CD4-positive, alpha-beta T cell (primary cell): ENCODE measurements at regions of chr6 and their contacts with region 1.

Region 1: DNA sequence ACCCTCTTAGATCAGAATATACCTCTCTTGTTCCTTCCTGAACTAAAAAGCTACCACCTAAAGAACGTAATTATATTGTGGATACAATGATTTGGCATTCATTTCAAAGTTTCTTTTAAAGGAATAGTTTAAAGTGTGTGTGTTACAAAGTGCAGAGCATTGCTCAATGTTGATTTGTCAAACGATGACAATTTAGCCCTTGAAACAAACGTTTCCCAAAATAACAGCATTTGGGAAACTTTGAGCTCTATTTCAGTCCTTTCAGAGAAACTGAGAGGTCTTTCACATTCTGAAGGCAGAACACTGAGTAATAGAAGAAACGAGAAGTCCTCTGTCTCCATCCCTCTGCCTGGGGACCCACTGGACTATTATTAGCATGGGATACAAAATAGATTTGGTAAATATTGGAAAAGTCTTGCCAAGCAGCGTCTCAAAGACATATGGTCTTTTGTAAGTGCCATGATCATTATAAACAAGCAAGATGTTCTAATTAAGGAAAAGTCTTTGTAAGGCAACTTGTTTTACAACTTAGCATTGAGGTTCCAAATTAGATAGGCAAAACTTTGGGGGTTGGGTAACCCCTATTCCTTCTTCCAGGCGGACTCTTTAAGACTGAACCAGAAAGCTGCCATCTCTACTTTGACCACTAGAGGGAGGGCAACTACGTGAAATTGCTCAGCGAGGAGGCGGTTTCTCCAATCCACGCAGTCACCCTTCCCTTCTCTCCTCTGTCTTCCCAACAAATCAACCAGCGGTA is 208.8 kb downstream of the RNF144B start:
- DNase-seq: peak in 9 of 14 experiments; percentile 4 to 57 (median 22)
- ATAC-seq: no peak
- H3K4me3 ChIP-seq: no peak overlapping the region
- H3K4me3 Mint-ChIP-seq: no peak overlapping the region
- H3K27ac ChIP-seq: no peak overlapping the region
- H3K27ac Mint-ChIP-seq: no peak overlapping the region
- H3K4me1 ChIP-seq: no peaks in the 10 kb centered on the region
- H3K4me1 Mint-ChIP-seq: no peaks in the 10 kb centered on the region
- H3K27me3 ChIP-seq: no peaks in the 10 kb centered on the region
- H3K27me3 Mint-ChIP-seq: peaks cover 42% of the 10 kb centered on the region
- CTCF ChIP-seq: peak; percentile 95

Region 2: GRCh38 chr6:20056350-20056992 is 1460.5 kb after region 1 on chr6:
- CTCF ChIA-PET with region 1: no interaction called
- POLR2A ChIA-PET with region 1: no interaction called
- intact Hi-C with region 1: loop called in 1 of 2 experiments (anchors 5 kb)
- DNase-seq: peak in 1 of 14 experiments; percentile 6
- ATAC-seq: no peak
- H3K4me3 ChIP-seq: no peak overlapping the region
- H3K4me3 Mint-ChIP-seq: no peak overlapping the region
- H3K27ac ChIP-seq: no peak overlapping the region
- H3K27ac Mint-ChIP-seq: no peak overlapping the region
- H3K4me1 ChIP-seq: no peaks in the 10 kb centered on the region
- H3K4me1 Mint-ChIP-seq: no peaks in the 10 kb centered on the region
- H3K27me3 ChIP-seq: no peaks in the 10 kb centered on the region
- H3K27me3 Mint-ChIP-seq: no peaks in the 10 kb centered on the region
- CTCF ChIP-seq: no peak